Activated naive CD4-positive, alpha-beta T cell treated with anti-CD3 and anti-CD28 coated beads for 36 hours (primary cell): ENCODE measurements at regions of chr1 and their contacts with region 1.

Region 1: GRCh38 chr1:108643492-108644335 is 17.2 kb downstream of the HENMT1 start:
- DNase-seq: peak; percentile 71
- H3K4me3 Mint-ChIP-seq: no peak overlapping the region
- H3K27ac Mint-ChIP-seq: no peak overlapping the region
- H3K4me1 Mint-ChIP-seq: peaks cover 60% of the 10 kb centered on the region
- H3K27me3 Mint-ChIP-seq: no peaks in the 10 kb centered on the region

Region 2: GRCh38 chr1:108125312-108126138 is 518.2 kb before region 1 on chr1:
- CTCF ChIA-PET with region 1: no interaction called
- intact Hi-C with region 1: loop called (anchors 5 kb)
- DNase-seq: peak; percentile 80
- H3K4me3 Mint-ChIP-seq: no peak overlapping the region
- H3K27ac Mint-ChIP-seq: no peak overlapping the region
- H3K4me1 Mint-ChIP-seq: peaks cover 3% of the 10 kb centered on the region
- H3K27me3 Mint-ChIP-seq: no peaks in the 10 kb centered on the region

Region 3: DNA sequence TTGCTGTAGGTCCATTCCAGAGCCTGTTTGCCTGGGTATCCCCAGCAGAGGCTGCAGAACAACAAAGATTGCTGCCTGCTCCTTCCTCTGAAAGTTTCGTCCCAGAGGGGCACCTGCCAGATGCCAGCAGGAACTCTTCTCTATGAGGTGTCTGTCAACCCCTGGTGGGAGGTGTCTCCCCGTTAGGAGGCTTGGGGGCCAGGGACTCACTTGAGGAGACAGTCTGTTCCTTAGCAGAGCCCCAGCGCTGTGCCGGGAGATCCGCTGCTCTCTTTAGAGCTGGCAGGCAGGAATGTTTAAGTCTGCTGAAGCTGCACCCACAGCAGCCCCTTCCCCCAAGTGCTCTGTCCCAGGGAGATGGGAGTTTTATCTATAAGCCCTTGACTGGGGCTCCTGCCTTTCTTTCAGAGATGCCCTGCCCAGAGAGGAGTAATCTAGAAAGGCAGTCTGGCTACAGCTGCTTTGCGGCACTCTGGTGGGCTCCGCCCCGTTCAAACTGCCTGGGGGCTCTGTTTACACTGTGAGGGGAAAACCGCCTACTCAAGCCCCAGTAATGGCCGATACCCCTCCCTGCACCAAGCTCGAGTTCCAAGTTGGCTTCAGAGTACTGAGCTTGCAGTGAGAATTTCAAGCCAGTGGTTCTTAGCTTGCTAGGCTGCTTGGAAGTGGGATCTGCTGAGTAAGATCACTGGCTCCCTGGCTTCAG is 434.8 kb before region 1 on chr1:
- CTCF ChIA-PET with region 1: interaction called, 3 read pairs
- intact Hi-C with region 1: loop called (anchors 1 kb)
- DNase-seq: no peak
- H3K4me3 Mint-ChIP-seq: no peak overlapping the region
- H3K27ac Mint-ChIP-seq: no peak overlapping the region
- H3K4me1 Mint-ChIP-seq: peaks cover 3% of the 10 kb centered on the region
- H3K27me3 Mint-ChIP-seq: peaks cover 8% of the 10 kb centered on the region

Region 4: DNA sequence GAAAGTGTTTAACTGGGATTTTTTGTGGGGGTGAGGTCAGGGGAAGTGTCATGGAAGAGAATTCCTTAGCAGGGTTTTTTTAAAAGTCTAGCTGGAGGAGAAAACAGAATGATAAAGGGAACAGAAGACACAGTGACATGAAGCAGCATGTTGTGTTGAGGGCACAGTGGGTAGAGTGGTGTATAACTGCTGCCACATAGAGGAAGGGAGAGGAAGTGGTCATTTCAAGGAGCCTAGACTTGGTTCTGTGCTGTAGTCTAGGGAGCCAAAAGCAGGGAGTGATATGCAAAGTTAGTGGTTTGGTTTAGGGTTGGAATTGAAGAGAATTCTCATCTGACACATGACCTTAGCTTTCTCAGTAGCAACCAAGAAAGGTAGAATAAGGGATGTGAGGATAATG is 73.6 kb before region 1 on chr1:
- CTCF ChIA-PET with region 1: interaction called, 8 read pairs
- intact Hi-C with region 1: loop called (anchors 1 kb)
- DNase-seq: peak; percentile 41
- H3K4me3 Mint-ChIP-seq: no peak overlapping the region
- H3K27ac Mint-ChIP-seq: no peak overlapping the region
- H3K4me1 Mint-ChIP-seq: no peaks in the 10 kb centered on the region
- H3K27me3 Mint-ChIP-seq: no peaks in the 10 kb centered on the region

Region 5: GRCh38 chr1:108605633-108606032 is 38.1 kb before region 1 on chr1:
- CTCF ChIA-PET with region 1: no interaction called
- intact Hi-C with region 1: no loop called
- DNase-seq: no peak
- H3K4me3 Mint-ChIP-seq: no peak overlapping the region
- H3K27ac Mint-ChIP-seq: no peak overlapping the region
- H3K4me1 Mint-ChIP-seq: no peaks in the 10 kb centered on the region
- H3K27me3 Mint-ChIP-seq: no peaks in the 10 kb centered on the region

Region 6: DNA sequence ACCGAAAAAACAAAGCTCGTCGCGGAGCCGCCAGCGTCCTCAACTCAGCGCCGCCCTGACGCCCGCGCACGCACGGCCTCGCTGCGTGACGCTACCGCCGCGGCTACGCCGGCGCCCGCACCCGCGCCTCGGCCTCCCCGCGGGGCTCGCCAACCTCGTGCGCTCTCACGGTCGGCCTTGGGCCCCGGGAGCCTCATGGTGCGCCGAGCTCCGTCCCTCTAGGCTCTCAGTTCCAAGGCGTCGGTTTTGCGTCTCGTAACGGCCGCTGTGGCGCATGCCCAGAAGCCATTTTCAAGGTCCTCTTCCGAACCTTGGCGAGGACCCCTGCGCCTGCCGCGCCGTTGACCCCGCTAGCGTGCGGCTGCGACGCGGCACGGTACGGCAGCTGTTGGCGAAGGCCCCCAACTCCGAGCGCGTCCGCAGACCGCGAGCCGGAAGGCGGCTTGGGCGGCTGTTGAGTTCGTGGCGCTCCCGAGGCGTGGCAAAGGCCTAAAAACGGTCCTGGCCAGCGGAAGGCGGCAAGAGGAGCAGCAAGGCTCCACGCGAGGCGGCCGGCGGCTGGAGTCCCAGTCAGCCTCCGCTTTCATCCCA is 17.4 kb after region 1 on chr1 and contains the start of gene HENMT1:
- CTCF ChIA-PET with region 1: interaction called, 11 read pairs
- intact Hi-C with region 1: loop called (anchors 1 kb)
- DNase-seq: peak; percentile 78
- H3K4me3 Mint-ChIP-seq: peak within 1 kb of the TSS; percentile 84
- H3K27ac Mint-ChIP-seq: peak within 1 kb of the TSS; percentile 94
- H3K4me1 Mint-ChIP-seq: peaks cover 25% of the 10 kb centered on the region
- H3K27me3 Mint-ChIP-seq: no peaks in the 10 kb centered on the region
- total RNA-seq, gene HENMT1: 18.7 to 19.3 TPM

Region 7: GRCh38 chr1:108746372-108747205 is 102.9 kb after region 1 on chr1 and contains the start of gene STXBP3:
- CTCF ChIA-PET with region 1: no interaction called
- intact Hi-C with region 1: loop called (anchors 1 kb)
- DNase-seq: peak; percentile 100
- H3K4me3 Mint-ChIP-seq: peak within 1 kb of the TSS; percentile 94
- H3K27ac Mint-ChIP-seq: peak within 1 kb of the TSS; percentile 92
- H3K4me1 Mint-ChIP-seq: peaks cover 28% of the 10 kb centered on the region
- H3K27me3 Mint-ChIP-seq: no peaks in the 10 kb centered on the region
- total RNA-seq, gene STXBP3: 29.1 to 30.3 TPM